Mammary epithelial cell (primary cell): ENCODE measurements at regions of chr6 and their contacts with region 1.

Region 1: DNA sequence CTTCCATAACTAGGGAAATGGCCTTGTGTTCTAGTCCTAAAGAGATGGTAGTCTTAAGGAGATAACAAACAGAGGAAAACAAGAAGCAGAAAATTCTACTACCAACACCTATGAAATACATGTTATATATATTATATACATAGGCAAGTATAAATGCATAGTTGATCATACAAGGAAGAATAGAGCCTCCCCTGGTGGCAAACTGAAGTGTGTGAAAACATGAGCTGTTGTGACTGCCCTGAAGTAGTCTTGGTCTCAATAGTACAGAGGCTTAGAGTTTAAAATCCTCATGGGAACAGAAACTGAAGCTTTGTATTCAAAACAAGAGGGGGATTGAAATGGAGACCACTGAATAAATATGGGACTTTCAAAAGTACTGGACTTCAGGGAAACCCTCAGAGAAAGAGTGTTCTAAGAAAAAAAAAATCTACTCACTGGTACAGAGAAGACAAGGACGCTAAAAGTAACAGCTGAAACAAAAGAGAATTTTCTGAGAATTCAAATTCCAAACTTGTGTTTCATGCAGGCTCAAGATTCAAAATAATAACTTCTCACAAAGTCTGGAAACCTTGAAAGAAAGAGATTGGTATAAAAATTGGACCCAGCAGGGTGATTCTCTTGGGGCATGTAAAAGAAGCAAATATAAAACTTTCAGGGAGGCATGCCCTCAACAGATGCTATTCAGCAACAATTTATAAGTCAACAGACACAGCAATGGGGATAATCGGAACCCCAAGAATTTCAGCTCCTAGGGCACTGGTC is 59.7 kb upstream of the SAMD3 start:
- DNase-seq: peak; percentile 8
- H3K4me3 ChIP-seq: no peak overlapping the region
- H3K27ac ChIP-seq: no peak overlapping the region
- H3K4me1 ChIP-seq: no peaks in the 10 kb centered on the region
- H3K27me3 ChIP-seq: no peaks in the 10 kb centered on the region
- CTCF ChIP-seq: peak; percentile 56 to 80

Region 2: GRCh38 chr6:129957941-129958898 is 324.2 kb before region 1 on chr6:
- CTCF ChIA-PET with region 1: no interaction called
- dilution Hi-C with region 1: no loop called
- in situ Hi-C with region 1: no loop called
- intact Hi-C with region 1: no loop called
- DNase-seq: no peak
- H3K4me3 ChIP-seq: no peak overlapping the region
- H3K27ac ChIP-seq: no peak overlapping the region
- H3K4me1 ChIP-seq: peaks cover 13% of the 10 kb centered on the region
- H3K27me3 ChIP-seq: no peaks in the 10 kb centered on the region
- CTCF ChIP-seq: no peak

Region 3: DNA sequence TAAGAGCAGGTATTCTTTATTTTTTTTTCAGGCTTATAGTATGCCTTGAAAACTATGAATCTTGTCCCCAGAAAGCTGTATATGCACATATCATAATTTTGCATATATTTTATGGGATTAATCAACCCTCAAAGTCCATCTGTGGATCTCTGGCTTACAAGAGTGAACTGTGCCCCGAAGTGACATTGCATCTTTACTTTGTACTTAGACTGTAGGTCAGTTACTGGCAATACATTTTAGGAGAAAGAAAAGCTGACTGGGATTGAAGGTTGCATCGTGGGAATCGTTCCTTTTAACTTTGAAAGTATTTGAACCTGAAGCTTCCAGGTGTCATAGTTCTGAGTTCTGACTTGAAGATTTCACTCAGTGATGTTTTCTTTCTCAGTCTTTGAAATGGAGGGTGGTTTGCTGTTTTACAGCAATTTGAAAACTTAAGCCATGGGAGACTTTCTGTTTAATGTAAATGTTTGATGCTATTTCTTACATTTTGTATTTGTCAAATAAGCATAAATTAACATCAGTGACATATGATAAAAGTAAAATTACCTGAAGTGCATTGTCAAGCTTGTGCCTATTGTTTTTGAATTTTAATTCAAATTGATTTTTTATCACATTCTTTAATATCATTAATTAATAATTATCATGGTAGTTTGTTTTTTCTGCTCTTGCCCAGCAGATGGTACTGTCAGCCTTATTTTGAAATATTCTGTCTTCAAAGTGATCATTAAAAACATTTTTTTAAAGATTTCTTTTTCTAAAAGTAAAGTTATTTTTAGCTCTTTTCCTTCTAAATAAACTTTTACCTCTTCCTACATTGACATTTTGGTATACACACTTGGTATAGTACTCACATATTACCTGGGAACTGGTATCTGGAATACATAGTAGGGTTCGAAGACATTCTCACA is 235.1 kb before region 1 on chr6:
- CTCF ChIA-PET with region 1: no interaction called
- dilution Hi-C with region 1: no loop called
- in situ Hi-C with region 1: loop called in 1 of 2 experiments (anchors 10 kb)
- intact Hi-C with region 1: loop called (anchors 1 kb)
- DNase-seq: no peak
- H3K4me3 ChIP-seq: no peak overlapping the region
- H3K27ac ChIP-seq: no peak overlapping the region
- H3K4me1 ChIP-seq: no peaks in the 10 kb centered on the region
- H3K27me3 ChIP-seq: no peaks in the 10 kb centered on the region
- CTCF ChIP-seq: peak; percentile 2 to 17

Region 4: DNA sequence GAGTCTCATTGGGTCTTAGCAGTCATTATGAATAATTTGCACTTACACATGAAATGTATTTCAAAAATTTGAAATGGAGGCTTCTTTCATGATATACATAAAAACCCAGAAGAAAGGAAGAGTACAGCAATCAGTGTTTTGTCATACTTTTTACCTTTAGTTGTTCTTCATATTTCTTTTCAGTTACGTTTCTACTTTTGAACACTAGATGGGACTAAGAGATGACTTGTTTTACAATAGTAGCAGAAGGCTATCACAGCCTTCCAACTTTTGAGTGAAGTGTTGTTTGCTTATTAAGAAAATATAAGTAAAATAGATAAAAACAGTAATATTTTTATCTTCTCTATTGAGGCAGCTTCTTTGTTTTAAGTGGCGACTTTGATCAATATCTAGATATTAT is 205.9 kb before region 1 on chr6:
- CTCF ChIA-PET with region 1: no interaction called
- dilution Hi-C with region 1: no loop called
- in situ Hi-C with region 1: no loop called
- intact Hi-C with region 1: loop called (anchors 1 kb)
- DNase-seq: no peak
- H3K4me3 ChIP-seq: no peak overlapping the region
- H3K27ac ChIP-seq: no peak overlapping the region
- H3K4me1 ChIP-seq: no peaks in the 10 kb centered on the region
- H3K27me3 ChIP-seq: no peaks in the 10 kb centered on the region
- CTCF ChIP-seq: peak in 1 of 2 donors; percentile 28